A549 (cell line): ENCODE measurements at regions of chr9 and their contacts with region 1.

Region 1: GRCh38 chr9:124617471-124618141 is 110.4 kb upstream of the NR5A1 start:
- DNase-seq: peak; percentile 78 to 87
- ATAC-seq: peak; percentile 98 to 99
- H3K4me3 ChIP-seq: no peak overlapping the region
- H3K27ac ChIP-seq: peak overlapping the region; percentile 28 to 70; a peak in 4 of 6 replicates
- H3K4me1 ChIP-seq: peaks cover 15% of the 10 kb centered on the region
- CTCF ChIP-seq: peak; percentile 96
- EP300 ChIP-seq: no peak
- POLR2A ChIP-seq: no peak
- RAD21 ChIP-seq: peak; percentile 95 to 98

Region 2: DNA sequence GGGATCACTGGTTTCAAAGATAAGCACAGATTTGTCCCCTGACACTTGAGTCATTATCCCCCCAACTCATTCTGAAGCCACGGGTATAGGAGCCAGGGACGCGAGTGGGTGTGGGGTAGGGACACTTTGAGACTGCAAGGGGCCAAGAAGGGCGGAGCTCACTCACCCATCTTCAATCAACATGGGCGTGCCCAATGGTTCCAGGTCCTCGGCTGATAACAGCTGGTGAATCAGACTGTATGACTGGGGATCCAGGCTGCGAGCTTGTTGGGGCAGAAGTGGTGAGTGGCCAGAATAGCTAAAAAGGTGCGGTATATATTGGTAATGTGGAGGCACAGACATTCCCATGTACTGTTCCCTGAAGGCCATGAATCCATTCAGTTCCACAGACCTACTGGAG is 79.7 kb before region 1 on chr9:
- CTCF ChIA-PET with region 1: interaction called, 13 read pairs
- POLR2A ChIA-PET with region 1: no interaction called
- DNase-seq: no peak
- ATAC-seq: no peak
- H3K4me3 ChIP-seq: no peak overlapping the region
- H3K27ac ChIP-seq: no peak overlapping the region
- H3K4me1 ChIP-seq: no peaks in the 10 kb centered on the region
- CTCF ChIP-seq: no peak
- EP300 ChIP-seq: no peak
- POLR2A ChIP-seq: no peak
- RAD21 ChIP-seq: no peak

Region 3: GRCh38 chr9:124593651-124594058 is 24.0 kb before region 1 on chr9:
- CTCF ChIA-PET with region 1: interaction called, 38 read pairs
- POLR2A ChIA-PET with region 1: no interaction called
- DNase-seq: no peak
- ATAC-seq: no peak
- H3K4me3 ChIP-seq: no peak overlapping the region
- H3K27ac ChIP-seq: no peak overlapping the region
- H3K4me1 ChIP-seq: peaks cover 21% of the 10 kb centered on the region; the same call in 2 of the 3 replicates
- CTCF ChIP-seq: no peak
- EP300 ChIP-seq: no peak
- POLR2A ChIP-seq: no peak
- RAD21 ChIP-seq: no peak

Region 4: DNA sequence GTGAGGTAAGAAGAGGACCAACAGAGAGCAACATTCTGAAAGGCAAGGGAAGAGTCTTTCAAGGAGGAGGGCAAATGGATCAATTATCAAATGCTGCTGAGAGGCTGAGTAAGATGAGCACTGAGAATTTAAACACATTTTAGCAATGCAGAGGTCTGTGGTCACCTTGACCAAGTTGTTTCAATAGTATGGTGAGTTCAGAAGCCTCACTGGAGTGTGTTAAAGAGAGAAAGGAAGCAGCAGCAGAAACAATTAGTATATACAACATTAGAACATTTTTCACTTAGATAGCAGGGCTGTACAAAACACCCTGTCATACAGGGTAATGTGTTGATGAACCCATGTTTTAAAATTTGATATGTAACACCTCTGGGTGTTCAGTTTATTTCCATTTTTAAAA is 22.0 kb after region 1 on chr9:
- CTCF ChIA-PET with region 1: interaction called, 24 read pairs
- POLR2A ChIA-PET with region 1: no interaction called
- DNase-seq: no peak
- ATAC-seq: no peak
- H3K4me3 ChIP-seq: no peak overlapping the region
- H3K27ac ChIP-seq: no peak overlapping the region
- H3K4me1 ChIP-seq: no peaks in the 10 kb centered on the region
- CTCF ChIP-seq: no peak
- EP300 ChIP-seq: no peak
- POLR2A ChIP-seq: no peak
- RAD21 ChIP-seq: no peak

Region 5: DNA sequence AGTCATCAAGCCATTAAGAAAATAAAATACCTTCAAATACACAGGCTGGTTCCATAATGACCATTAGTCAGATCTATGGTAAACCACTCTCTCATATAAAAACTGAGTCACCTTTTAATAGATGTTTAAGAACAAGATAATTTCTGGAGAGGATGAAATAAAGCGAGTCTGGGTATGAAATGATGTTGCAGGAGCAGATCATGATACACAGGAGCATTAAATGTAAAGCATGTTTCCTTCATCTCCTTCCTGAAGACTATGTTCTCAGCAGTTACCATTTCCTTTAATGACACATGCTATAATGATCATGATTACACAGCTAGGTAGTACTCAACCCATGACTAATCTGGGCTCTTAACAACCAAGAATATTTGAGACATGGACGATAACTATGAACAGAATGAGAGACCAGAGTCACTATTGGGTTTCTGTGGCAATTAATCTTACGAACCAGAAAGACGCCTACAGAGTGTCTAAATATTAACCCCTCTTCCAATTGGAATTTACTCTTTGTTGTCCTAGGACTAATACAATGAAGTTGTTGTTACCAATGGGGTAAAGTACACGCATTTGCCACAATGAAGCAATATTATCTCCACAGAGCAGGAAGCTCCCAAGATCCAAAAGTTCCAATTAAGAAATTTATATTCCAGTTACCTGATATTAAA is 47.9 kb after region 1 on chr9:
- CTCF ChIA-PET with region 1: interaction called, 37 read pairs
- POLR2A ChIA-PET with region 1: interaction called, 7 read pairs
- DNase-seq: peak in 1 of 2 experiments; percentile 29
- ATAC-seq: peak; percentile 24 to 72; a peak in 4 of 6 replicates
- H3K4me3 ChIP-seq: no peak overlapping the region
- H3K27ac ChIP-seq: no peak overlapping the region
- H3K4me1 ChIP-seq: peaks cover 59% of the 10 kb centered on the region
- CTCF ChIP-seq: no peak
- EP300 ChIP-seq: no peak
- POLR2A ChIP-seq: no peak
- RAD21 ChIP-seq: no peak

Region 6: GRCh38 chr9:124697326-124698200 is 80.0 kb after region 1 on chr9:
- CTCF ChIA-PET with region 1: interaction called, 15 read pairs
- POLR2A ChIA-PET with region 1: no interaction called
- DNase-seq: peak in 1 of 2 experiments; percentile 7
- ATAC-seq: peak in 1 of 2 experiments; percentile 56; a peak in 3 of 6 replicates
- H3K4me3 ChIP-seq: no peak overlapping the region
- H3K27ac ChIP-seq: peak overlapping the region in 1 of 2 experiments; percentile 78; a peak in 2 of 6 replicates
- H3K4me1 ChIP-seq: peaks cover 51% of the 10 kb centered on the region
- CTCF ChIP-seq: no peak
- EP300 ChIP-seq: no peak
- POLR2A ChIP-seq: no peak
- RAD21 ChIP-seq: no peak

Region 7: DNA sequence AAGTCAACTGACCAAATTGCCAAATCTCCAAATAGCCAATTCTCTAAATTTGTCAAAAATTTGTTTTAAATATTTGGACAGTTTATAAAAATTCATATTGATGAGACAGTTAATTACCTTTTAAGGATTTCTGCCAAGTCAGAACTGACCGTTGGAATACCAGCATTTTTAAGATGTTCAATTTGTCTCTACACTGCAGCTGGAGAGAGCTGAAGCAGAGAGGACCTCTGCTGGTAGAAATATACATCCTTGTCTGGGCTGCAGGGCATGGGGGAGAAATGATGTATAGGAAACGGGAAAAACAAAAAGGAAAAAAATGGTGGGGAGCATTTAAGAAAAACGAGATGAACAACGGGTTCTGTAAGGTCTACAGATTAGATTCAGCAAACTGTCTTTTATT is 136.7 kb after region 1 on chr9:
- CTCF ChIA-PET with region 1: interaction called, 25 read pairs
- POLR2A ChIA-PET with region 1: no interaction called
- DNase-seq: peak in 1 of 2 experiments; percentile 40
- ATAC-seq: peak; percentile 76 to 90; a peak in 4 of 6 replicates
- H3K4me3 ChIP-seq: no peak overlapping the region
- H3K27ac ChIP-seq: no peak overlapping the region
- H3K4me1 ChIP-seq: peaks cover 33% of the 10 kb centered on the region
- CTCF ChIP-seq: peak; percentile 62
- EP300 ChIP-seq: no peak
- POLR2A ChIP-seq: no peak
- RAD21 ChIP-seq: peak; percentile 57 to 71